ENCODE measurements at regions of chr16 and their contacts with region 1.

Region 1: GRCh38 chr16:19542138-19542821 is 13.2 kb upstream of the VPS35L start:
- DNase-seq: no peak
- CTCF ChIP-seq: no peak

Region 2: DNA sequence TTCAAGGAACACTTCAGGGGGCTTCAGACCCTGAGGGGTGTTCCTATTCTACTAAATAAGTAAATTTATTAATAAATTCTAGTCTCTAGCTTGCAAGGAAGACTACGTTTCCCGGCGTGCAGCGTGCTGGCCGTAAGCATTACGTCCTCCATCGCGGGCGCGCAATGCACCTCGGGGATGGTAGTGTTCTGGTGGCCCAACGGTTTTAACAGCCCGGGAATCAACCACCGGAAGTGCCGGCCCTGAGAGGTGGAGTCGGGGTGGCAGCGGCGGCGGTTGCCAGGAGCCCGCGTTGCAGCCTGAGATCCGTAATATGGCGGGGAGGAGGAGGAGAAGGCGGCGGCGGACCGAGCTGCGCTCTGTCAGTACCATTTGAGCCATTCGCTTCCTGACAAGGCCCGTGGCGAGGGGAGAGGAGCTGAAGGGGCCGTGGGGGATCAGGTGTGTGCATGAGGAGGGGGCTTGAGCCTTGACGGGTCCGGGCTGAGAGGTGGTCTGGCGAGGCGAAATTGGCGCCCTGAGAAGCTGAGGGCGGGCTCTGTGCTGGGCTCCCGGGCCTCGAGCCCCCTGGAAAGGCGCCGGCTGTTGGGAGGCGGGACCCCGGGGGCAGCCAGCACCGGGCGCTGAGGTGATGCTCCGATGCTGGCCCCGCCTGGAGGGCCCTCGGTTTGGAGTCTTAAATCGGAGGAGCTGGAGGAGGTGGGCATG is 18.5 kb before region 1 on chr16 and contains the start of gene CCP110:
- CTCF ChIA-PET with region 1: interaction called, 17 read pairs
- POLR2A ChIA-PET with region 1: no interaction called
- DNase-seq: peak; percentile 93
- CTCF ChIP-seq: no peak

Region 3: GRCh38 chr16:19574615-19575014 is 32.3 kb after region 1 on chr16:
- CTCF ChIA-PET with region 1: no interaction called
- POLR2A ChIA-PET with region 1: no interaction called
- DNase-seq: no peak
- CTCF ChIP-seq: no peak

Region 4: DNA sequence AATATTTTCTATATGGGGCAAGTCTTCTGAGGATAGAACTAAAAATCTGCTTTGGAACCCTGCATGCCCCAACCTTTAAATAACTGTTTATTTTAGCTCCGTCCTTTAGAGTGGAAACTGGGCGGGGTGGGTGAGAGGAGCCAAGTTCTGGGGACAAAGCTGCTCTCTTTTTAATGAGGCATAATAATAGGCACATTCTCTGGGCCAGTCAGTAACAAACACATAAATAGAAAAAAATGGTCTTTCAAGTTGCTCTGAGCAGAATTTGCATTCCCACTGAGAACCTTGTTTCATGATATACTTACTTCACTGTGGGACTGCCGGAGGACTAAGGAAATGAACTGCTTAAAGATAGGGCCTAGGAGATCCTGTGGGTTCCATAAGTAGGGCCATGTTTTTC is 124.2 kb after region 1 on chr16:
- CTCF ChIA-PET with region 1: no interaction called
- POLR2A ChIA-PET with region 1: no interaction called
- DNase-seq: no peak
- CTCF ChIP-seq: no peak

Measured in GM10248 (cell line).